SK-N-SH (cell line): ENCODE measurements at regions of chr1 and their contacts with region 1.

Region 1: DNA sequence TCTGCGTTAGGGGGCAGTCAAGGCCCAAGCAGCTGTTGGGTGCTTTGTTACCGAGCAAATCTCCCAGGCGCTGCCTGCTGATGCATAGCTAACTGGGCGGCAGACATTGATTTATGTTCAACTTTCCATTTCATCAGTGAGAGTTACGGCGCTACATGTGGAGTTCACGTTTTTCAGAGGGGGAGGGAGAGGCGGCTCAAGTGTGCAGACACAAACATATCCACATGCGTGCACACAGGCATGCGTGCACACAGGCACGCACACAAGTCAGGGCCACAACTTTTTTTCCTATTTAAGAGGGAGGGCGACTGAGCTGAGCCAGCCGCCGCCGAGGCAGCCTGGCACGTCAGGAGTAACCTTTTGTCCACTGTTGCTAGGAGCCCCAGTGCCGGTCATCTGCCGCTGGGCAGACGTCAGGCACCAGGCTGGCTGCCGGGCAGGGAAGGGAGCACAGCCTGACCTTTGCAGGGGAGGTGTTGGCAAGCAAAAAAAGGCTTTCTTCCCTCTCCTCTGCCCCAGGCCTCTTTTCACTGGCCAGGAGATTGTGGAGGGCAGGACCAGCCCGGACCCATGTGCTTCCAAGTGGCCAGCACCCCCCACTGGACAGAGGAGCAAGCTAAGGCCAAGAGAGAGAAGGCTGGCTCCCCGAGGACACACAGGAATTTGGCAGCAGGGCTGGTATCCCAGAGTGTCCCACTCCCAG is 73.3 kb downstream of the MRPL37 start:
- DNase-seq: peak; percentile 80
- H3K4me3 ChIP-seq: no peak overlapping the region
- H3K27ac ChIP-seq: peak overlapping the region in 1 of 2 experiments; percentile 90; a peak in 2 of 4 replicates
- H3K4me1 ChIP-seq: peaks cover 0 to 46% of the 10 kb centered on the region in 2 experiments; a peak in 2 of 4 replicates
- H3K27me3 ChIP-seq: no peaks in the 10 kb centered on the region
- CTCF ChIP-seq: no peak; the same call in 1 of the 2 replicates
- EP300 ChIP-seq: 0 out of 4 replicates have a peak, but pooled peaks of 1 of the 2 experiments have one; percentile 23
- RAD21 ChIP-seq: peak; percentile 65

Region 2: DNA sequence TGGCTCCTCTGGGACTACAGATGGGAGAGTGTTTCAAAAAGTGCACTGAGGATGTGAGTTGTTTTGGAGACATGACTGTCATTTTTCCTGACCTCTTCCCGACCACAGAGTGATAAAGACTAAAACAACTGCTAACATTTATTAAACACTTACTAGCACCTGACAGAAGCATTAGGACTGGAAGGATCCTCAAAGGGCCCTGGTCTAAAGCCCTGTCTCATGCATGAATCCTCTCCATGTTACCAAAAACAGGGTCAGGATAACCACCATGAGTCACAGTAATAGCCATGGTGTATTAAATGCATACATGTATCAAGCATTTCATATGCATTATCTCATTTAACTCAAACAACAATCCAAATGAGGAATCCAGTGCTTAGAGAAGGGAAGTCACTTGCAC is 85.0 kb before region 1 on chr1:
- CTCF ChIA-PET with region 1: no interaction called
- POLR2A ChIA-PET with region 1: no interaction called
- DNase-seq: no peak
- H3K4me3 ChIP-seq: no peak overlapping the region
- H3K27ac ChIP-seq: no peak overlapping the region
- H3K4me1 ChIP-seq: no peaks in the 10 kb centered on the region
- H3K27me3 ChIP-seq: no peaks in the 10 kb centered on the region
- CTCF ChIP-seq: no peak
- EP300 ChIP-seq: no peak
- RAD21 ChIP-seq: no peak

Region 3: GRCh38 chr1:54227091-54227602 is 46.1 kb before region 1 on chr1:
- CTCF ChIA-PET with region 1: interaction called, 20 read pairs
- POLR2A ChIA-PET with region 1: interaction called, 3 read pairs
- DNase-seq: peak; percentile 76
- H3K4me3 ChIP-seq: no peak overlapping the region
- H3K27ac ChIP-seq: peak overlapping the region; percentile 36 to 95
- H3K4me1 ChIP-seq: peaks cover 18 to 88% of the 10 kb centered on the region in 2 experiments
- H3K27me3 ChIP-seq: no peaks in the 10 kb centered on the region
- CTCF ChIP-seq: no peak
- EP300 ChIP-seq: no peak
- RAD21 ChIP-seq: no peak

Region 4: GRCh38 chr1:54284781-54285529 is 11.7 kb after region 1 on chr1:
- CTCF ChIA-PET with region 1: interaction called, 13 read pairs
- POLR2A ChIA-PET with region 1: no interaction called
- DNase-seq: no peak
- H3K4me3 ChIP-seq: no peak overlapping the region
- H3K27ac ChIP-seq: no peak overlapping the region
- H3K4me1 ChIP-seq: peaks cover 13 to 54% of the 10 kb centered on the region in 2 experiments; a peak in 3 of 4 replicates
- H3K27me3 ChIP-seq: no peaks in the 10 kb centered on the region
- CTCF ChIP-seq: no peak
- EP300 ChIP-seq: no peak
- RAD21 ChIP-seq: no peak

Region 5: DNA sequence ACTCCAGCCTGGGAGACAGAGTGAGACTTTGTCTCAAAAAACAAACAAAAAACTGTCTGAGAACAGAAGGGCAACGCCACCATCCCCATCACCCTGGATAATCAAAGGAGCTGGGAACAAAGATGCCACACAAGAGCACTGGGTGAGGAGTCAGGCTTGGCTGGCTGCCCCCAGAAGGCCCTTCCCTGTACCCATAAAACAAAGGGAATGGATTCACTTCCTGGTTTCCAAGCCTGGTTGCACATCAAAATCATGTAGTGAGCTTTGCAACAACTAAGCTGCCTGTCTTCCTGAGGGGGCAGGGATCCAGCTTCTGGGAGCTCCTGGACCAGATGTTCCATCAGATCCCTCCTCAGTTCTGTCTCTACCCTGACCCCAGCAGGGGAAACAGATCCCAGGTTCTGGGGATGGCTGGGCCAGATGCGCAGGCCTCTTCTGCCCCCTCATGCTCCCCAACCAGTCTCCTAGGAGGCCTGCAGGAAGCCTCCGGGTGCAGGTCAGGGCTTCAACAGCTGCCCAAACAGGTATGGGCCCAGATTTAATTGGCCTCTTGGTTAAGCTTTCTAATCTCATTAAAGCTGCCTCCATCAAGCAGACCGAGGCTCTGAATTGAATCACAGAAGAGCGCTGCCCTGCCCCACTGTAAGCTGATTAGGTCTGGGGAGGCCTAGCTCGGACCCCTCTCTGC is 24.5 kb after region 1 on chr1:
- CTCF ChIA-PET with region 1: interaction called, 20 read pairs
- POLR2A ChIA-PET with region 1: no interaction called
- DNase-seq: peak; percentile 80
- H3K4me3 ChIP-seq: no peak overlapping the region
- H3K27ac ChIP-seq: peak overlapping the region in 1 of 2 experiments; percentile 96; a peak in 2 of 4 replicates
- H3K4me1 ChIP-seq: peaks cover 0 to 75% of the 10 kb centered on the region in 2 experiments; a peak in 2 of 4 replicates
- H3K27me3 ChIP-seq: no peaks in the 10 kb centered on the region
- CTCF ChIP-seq: no peak
- EP300 ChIP-seq: 0 out of 4 replicates have a peak, but pooled peaks of 1 of the 2 experiments have one; percentile 56
- RAD21 ChIP-seq: peak; percentile 45

Region 6: GRCh38 chr1:54310439-54311328 is 37.4 kb after region 1 on chr1:
- CTCF ChIA-PET with region 1: interaction called, 14 read pairs
- POLR2A ChIA-PET with region 1: interaction called, 3 read pairs
- DNase-seq: peak; percentile 65
- H3K4me3 ChIP-seq: no peak overlapping the region
- H3K27ac ChIP-seq: peak overlapping the region in 1 of 2 experiments; percentile 29; a peak in 1 of 4 replicates
- H3K4me1 ChIP-seq: peaks cover 8 to 75% of the 10 kb centered on the region in 2 experiments; a peak in 3 of 4 replicates
- H3K27me3 ChIP-seq: no peaks in the 10 kb centered on the region
- CTCF ChIP-seq: peak; percentile 58
- EP300 ChIP-seq: no peak
- RAD21 ChIP-seq: peak; percentile 70